ENCODE measurements at regions of chr2 and their contacts with region 1.

Region 1: DNA sequence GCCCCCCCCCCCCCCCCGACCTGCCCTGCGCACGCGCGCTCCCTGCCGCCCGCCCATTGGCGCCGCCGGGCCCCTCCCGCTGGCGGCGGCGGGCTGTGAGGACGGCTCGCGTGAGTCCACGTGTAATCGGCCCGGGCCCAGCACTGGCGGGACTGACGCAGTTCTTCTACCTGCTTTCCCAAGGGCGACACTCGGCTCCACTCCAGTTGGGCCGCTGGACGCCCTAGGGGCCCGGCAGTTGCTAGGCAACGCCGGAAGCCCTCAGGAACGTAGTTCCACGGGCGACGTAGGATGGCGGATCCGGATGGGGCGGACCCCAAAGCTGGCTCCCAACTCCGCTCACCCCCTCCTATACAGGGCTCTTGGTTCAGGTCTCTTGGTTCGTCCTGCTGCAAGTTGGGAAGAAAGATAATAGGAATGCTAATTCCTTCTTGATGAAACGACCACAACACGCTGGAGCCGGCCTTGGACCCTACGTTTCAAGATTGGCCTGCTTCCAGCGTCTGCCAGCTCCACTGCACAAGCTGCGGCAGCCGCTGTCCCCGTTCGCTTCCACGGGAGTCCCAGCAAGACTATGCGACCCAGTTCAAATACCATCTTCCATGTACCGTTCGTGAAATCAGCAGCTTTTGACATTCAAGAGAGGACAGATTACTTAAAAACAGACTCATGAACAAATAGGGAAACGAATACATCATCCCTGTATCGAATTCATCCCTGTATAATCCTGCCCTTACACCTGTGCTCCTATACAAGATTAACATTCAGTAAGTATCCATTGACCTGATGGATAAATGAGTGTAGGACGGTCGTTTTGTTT is 415 bp upstream of the MCFD2 start:
- H3K4me3 ChIP-seq: peak overlapping the region; percentile 95
- H3K27ac ChIP-seq: peak overlapping the region; percentile 87
- H3K4me1 ChIP-seq: peaks cover 4% of the 10 kb centered on the region
- CTCF ChIP-seq: no peak

Region 2: DNA sequence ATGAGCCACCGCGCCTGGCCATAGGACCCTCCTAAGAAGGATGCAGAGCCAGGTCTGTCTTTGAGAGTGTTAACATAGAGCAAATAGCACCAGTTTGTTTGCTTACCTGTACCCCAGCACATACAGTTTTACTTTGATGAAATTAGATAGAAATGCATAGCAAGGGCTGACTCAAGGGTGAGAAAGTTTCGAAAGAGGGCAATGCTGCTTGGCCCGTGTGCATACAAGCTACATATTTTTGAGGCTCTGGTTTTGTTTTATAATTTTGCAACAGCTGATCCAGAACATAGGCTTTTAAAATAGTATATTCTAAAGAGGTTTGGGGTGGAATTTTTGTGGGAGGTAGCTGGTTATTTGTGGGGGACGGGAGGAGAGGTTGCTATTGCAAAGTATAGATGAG is 152.2 kb before region 1 on chr2:
- CTCF ChIA-PET with region 1: no interaction called
- POLR2A ChIA-PET with region 1: no interaction called
- H3K4me3 ChIP-seq: no peak overlapping the region
- H3K27ac ChIP-seq: no peak overlapping the region
- H3K4me1 ChIP-seq: peaks cover 3% of the 10 kb centered on the region; the same call in 1 of the 2 replicates
- CTCF ChIP-seq: no peak

Region 3: DNA sequence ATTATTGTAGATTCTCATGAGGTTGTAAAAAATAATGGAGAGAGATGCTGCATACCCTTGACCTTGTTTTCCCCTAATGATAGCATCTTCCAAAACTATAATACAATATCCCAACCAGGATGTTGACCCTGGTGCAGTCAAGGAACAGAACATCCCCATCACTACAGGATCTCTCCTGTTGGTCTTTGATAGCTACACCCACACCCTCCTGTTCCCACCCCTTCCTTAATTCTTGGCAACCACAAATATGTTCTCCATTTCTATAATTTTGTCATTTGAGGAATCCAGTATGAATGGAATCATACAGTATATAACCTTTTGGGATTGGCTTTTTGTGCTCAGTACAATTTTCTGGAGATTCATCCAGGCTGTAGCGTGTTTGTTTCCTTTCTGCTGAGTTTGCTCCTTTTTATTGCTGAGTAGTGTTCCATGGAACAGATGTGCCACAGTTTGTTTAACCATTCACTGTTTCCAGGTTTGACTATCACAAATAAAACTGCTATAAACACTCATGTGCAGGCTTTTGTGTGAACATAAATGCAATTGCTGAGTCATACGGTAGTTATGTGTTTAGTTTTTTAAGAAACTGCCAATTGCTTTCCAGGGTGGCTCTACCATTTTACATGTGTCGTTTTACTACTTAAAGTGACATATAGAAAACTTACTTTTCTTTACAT is 22.6 kb before region 1 on chr2:
- CTCF ChIA-PET with region 1: no interaction called
- POLR2A ChIA-PET with region 1: no interaction called
- H3K4me3 ChIP-seq: no peak overlapping the region
- H3K27ac ChIP-seq: no peak overlapping the region
- H3K4me1 ChIP-seq: no peaks in the 10 kb centered on the region
- CTCF ChIP-seq: no peak

Region 4: GRCh38 chr2:46929612-46930011 is 13.6 kb after region 1 on chr2:
- CTCF ChIA-PET with region 1: interaction called, 29 read pairs
- POLR2A ChIA-PET with region 1: interaction called, 3 read pairs
- H3K4me3 ChIP-seq: no peak overlapping the region
- H3K27ac ChIP-seq: no peak overlapping the region
- H3K4me1 ChIP-seq: no peaks in the 10 kb centered on the region
- CTCF ChIP-seq: no peak

Region 5: DNA sequence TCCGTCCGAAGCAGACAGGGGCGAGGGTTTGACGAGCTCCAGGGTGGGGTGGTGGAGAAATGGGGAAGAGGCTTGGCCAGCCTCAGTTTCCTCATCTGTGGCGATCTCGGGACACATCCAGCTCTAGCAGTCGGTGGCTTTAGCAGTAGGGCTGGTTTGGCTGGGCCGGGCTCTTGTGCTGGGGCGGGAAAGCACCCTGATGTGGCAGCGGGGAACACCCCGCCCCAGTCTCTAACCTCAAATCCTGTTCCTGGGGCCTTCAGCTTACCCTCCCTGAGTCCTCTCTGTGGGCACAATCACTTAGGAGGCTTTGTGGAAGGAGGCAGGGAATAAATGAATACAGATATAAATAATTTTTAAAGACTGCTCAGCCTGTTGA is 26.1 kb after region 1 on chr2:
- CTCF ChIA-PET with region 1: interaction called, 29 read pairs
- POLR2A ChIA-PET with region 1: no interaction called
- H3K4me3 ChIP-seq: peak overlapping the region; percentile 84
- H3K27ac ChIP-seq: peak overlapping the region; percentile 82; the same call in 1 of the 2 replicates
- H3K4me1 ChIP-seq: peaks cover 3% of the 10 kb centered on the region
- CTCF ChIP-seq: no peak

Measured in HEK293 (cell line).